Dorsolateral prefrontal cortex (tissue), 120 donors: ENCODE measurements at regions of chr3 and their contacts with region 1.

Region 1: DNA sequence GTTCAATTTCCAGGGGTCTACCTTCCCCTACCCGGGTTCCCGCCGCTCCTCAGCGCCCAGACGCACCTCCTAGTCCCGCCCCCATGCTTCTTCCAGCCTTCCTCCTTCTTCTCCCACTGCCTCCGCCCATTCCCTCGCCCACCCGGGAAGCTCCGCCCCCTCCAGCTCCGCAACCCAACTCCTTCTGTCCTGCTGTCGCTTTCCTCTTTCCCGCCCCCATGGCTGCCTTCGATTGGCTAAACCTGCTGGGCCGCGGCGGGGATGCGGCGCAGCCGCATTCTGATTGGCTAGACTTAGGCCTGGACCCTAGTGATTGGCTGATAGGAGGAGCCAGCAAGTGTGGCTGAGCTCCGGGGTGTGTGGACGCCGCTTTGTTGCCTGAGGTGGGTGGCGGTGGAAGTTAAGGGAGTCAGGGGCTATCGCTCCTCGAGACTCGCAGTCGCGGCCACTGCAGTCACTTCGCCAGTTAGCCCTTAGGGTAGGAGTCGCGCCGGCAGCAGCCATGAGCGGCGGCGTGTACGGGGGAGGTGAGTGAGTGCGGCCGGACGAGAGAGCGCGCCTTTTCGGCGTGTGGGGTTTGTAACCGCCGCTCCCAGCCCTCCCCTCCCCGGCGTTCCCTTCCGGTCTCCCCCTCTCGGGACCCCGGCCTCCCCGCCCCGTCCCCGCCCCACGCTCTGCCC is at the start of gene ACTL6A:
- DNase-seq: peak; percentile 96 to 100 (median 99)
- H3K4me3 ChIP-seq: peak within 1 kb of the TSS; percentile 65 to 98 (median 90)
- H3K27ac ChIP-seq: peak within 1 kb of the TSS in 49 of 59 donors; percentile 9 to 88 (median 74)
- H3K27me3 ChIP-seq: no peaks in the 10 kb centered on the region
- CTCF ChIP-seq: peak in 25 of 56 donors; percentile 8 to 57 (median 28)
- total RNA-seq, gene ACTL6A: 4.3 to 34.8 (median 14.3) TPM

Region 2: DNA sequence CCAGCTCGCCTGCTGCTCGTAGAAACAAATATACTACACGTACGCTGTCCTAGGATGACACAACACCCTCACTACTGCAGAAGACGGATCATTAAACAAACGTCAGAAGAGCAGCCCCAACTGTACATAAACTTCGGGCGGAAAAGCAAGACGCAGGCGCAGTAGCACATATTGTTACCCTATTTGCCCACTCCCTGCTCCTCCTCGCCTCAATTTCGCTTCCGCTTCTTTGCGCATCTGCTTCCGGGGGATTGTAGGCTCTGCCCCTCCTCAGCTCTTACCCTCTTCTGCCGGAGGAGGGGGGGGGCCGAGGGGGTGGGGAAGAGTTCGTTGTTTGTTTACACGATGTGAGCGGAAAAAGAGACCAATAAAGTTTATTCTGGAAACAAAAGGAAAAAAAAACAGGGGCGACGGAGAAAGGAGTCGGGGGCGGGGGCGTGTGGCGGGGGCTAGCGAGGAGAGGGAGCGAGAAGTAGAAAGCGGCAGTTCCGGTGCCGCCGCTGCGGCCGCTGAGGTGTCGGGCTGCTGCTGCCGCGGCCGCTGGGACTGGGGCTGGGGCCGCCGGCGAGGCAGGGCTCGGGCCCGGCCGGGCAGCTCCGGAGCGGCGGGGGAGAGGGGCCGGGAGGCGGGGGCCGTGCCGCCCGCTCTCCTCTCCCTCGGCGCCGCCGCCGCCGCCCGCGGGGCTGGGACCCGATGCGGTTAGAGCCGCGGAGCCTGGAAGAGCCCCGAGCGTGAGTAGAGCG is 414.7 kb before region 1 on chr3 and contains the start of gene PIK3CA:
- intact Hi-C with region 1: loop called in 1 of 2 experiments (anchors 5 kb)
- DNase-seq: peak; percentile 89 to 98 (median 96)
- H3K4me3 ChIP-seq: peak within 1 kb of the TSS; percentile 61 to 99 (median 93)
- H3K27ac ChIP-seq: peak within 1 kb of the TSS; percentile 83 to 99 (median 97)
- H3K27me3 ChIP-seq: no peaks in the 10 kb centered on the region
- CTCF ChIP-seq: peak in 5 of 56 donors; percentile 3 to 13 (median 7)
- total RNA-seq, gene PIK3CA: 25.8 to 58.1 (median 42.6) TPM

Region 3: GRCh38 chr3:179347345-179348194 is 215.2 kb before region 1 on chr3 and contains the start of gene MFN1:
- intact Hi-C with region 1: loop called in 1 of 2 experiments (anchors 2 kb)
- DNase-seq: peak; percentile 84 to 97 (median 95)
- H3K4me3 ChIP-seq: peak within 1 kb of the TSS; percentile 62 to 99 (median 85)
- H3K27ac ChIP-seq: peak within 1 kb of the TSS in 57 of 59 donors; percentile 27 to 92 (median 85)
- H3K27me3 ChIP-seq: no peaks in the 10 kb centered on the region
- CTCF ChIP-seq: peak in 28 of 56 donors; percentile 3 to 49 (median 25)
- total RNA-seq, gene MFN1: 33.7 to 79.8 (median 60.2) TPM

Region 4: DNA sequence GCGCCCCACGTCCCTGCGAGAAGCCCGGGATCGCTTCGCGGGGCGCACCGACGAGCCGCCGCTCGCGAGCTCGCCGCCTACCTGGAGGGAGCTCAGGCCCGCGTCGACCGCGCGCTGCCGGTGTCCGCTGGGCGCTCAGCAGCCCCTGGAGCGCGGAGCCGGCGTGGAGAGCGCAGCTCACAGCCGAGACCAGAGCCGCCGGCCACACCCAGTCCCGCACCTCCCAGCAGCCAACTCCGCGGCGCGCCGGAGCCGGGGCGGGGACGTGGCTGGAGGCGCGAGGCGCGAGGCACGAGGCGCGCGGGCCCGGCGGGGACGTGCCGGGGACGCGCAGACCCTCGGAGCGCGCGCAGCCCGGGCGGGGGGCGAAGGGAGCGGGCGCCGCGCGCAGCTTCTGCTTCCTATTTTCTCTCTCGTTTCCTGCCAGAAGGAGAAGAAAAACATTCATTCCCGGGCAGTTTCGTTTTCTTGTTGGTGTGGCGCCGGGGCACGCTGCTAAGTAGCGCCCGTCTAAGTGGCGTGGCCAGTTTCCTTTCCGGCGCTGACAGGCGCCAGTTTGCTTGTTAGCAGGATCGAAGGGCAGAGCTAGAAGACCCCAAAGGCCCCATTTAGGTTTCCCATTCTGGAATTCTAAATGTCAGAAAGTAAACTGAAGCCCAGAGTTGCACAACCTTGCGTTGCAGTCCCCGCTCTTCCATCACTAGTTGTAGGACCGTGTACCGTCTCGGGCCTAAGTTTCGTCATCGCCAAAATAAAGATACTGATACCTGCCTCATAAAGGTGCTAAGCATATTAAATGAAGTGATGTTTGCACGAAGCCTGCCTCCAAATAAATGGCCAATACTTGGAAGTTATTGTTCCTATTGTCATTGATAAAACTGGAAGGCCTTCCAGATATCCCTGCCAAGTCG is 111.2 kb before region 1 on chr3 and contains the start of gene GNB4:
- intact Hi-C with region 1: loop called in 1 of 2 experiments (anchors 5 kb)
- DNase-seq: peak in 8 of 10 donors; percentile 14 to 78 (median 54)
- H3K4me3 ChIP-seq: peak within 1 kb of the TSS; percentile 32 to 86 (median 72)
- H3K27ac ChIP-seq: peak within 1 kb of the TSS in 58 of 59 donors; percentile 41 to 94 (median 83)
- H3K27me3 ChIP-seq: peaks cover 0 to 4% (median 0%) of the 10 kb centered on the region in 45 donors
- CTCF ChIP-seq: peak in 1 of 56 donors; percentile 3
- total RNA-seq, gene GNB4: 10.8 to 30.8 (median 20.6) TPM

Region 5: GRCh38 chr3:179653096-179653797 is 90.5 kb after region 1 on chr3:
- intact Hi-C with region 1: loop called in 1 of 2 experiments (anchors 5 kb)
- DNase-seq: peak; percentile 54 to 84 (median 77)
- H3K4me3 ChIP-seq: peak overlapping the region; percentile 67 to 94 (median 84)
- H3K27ac ChIP-seq: peak overlapping the region; percentile 72 to 99 (median 96)
- H3K27me3 ChIP-seq: no peaks in the 10 kb centered on the region
- CTCF ChIP-seq: peak in 25 of 56 donors; percentile 10 to 48 (median 23)

Region 6: GRCh38 chr3:179801263-179801662 is 238.5 kb after region 1 on chr3:
- intact Hi-C with region 1: no loop called
- DNase-seq: no peak
- H3K4me3 ChIP-seq: no peak overlapping the region
- H3K27ac ChIP-seq: peak overlapping the region in 1 of 59 donors; percentile 11
- H3K27me3 ChIP-seq: no peaks in the 10 kb centered on the region
- CTCF ChIP-seq: no peak